Cardiac septum (tissue), 1 donor: ENCODE measurements at regions of chr6 and their contacts with region 1.

Region 1: DNA sequence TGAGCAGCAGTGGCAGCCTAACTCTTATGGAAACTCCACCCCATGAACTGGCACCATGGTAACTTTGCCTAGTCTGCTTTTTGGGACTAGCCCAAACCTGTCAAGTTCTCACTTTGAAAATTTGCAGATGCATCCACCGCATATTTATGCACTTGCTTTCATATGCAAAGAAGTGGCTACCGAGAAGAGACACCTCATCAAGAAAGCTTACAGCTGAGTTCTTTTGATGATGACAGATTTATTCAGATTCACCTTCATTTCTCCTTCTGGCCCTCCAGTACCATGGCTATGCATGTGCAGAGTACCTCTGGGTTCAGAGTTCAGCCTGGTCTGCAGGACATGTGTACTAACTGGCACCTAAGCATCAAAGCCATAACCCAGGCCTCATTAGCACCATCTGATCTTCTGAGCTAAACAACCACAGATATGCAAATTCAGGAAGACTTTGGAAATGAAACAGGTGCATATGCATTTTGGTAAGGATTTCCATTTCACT is 154.3 kb upstream of the TENT5A start:
- DNase-seq: no peak

Region 2: GRCh38 chr6:81859884-81860283 is 46.9 kb before region 1 on chr6:
- intact Hi-C with region 1: loop called (anchors 5 kb)
- DNase-seq: no peak

Region 3: DNA sequence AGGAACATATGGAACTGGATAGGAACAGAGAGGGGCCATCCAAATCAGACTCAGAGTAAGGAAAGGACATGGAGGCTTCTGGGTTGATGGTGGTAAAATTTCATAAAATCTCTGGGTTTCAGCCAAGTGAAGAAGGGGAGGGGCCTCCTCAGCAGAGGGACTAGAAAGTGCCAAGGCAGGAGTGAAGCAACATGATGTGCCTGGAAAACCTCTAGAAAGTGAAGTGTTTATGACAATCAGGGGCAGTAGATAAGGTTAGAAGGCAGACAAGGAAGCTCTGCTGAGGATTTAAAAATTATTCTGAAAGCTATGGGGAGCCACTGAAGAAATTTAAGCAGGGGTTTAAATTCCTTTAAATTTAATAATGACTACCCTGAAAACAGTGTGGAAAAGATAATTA is 28.3 kb before region 1 on chr6:
- intact Hi-C with region 1: no loop called
- DNase-seq: no peak

Region 4: GRCh38 chr6:82144007-82144851 is 237.5 kb after region 1 on chr6:
- intact Hi-C with region 1: loop called (anchors 10 kb)
- DNase-seq: no peak

Region 5: DNA sequence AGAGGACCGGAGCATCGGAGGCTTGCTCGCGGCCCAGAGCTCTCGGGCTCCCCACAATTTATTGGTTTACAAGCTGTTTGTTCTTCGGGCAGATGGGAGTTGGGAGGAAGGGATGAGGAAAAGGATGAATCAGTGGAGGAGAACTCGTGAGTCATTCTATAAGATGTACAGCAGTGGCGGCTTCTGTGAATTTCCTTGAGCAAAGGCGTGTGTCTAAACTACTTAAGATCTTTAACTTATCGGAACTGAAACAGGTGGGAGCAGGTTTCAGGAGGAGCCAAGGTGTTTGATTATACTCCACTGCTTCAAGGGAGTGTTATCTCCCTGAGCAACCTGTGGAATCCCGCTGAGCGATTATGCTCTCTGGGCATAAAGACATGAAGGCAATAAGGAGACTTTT is 391.3 kb after region 1 on chr6:
- intact Hi-C with region 1: no loop called
- DNase-seq: no peak